Activated CD8-positive, alpha-beta memory T cell treated with anti-CD3 and anti-CD28 coated beads, Interleukin-2, amount 10 ng/mL, durations not matched to agents 7 days and 5 days (primary cell): ENCODE measurements at regions of chr14 and their contacts with region 1.

Region 1: DNA sequence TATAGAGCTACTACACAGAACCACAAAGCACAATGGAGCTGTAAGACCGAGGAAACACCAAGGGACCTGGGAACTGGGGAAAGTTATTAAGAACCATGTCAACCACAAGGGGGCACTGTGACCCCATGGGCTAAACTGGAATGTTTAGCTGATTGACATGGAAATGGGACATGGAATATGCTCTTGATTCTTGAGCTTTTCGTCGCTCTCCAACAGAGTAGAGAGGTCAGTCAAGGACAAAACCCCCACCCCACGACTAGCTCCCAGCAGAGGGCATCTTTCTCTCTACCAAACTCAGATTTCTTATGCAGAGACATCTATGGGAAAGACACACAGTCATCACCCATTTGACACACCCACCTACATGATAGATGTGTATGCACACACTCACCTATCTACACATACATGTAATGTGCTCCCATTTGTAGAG is 10.1 kb downstream of the NDRG2 start:
- DNase-seq: peak; percentile 83
- ATAC-seq: peak; percentile 78
- H3K4me3 Mint-ChIP-seq: no peak overlapping the region
- H3K27ac Mint-ChIP-seq: no peak overlapping the region
- H3K4me1 Mint-ChIP-seq: no peaks in the 10 kb centered on the region
- H3K27me3 Mint-ChIP-seq: peaks cover 23% of the 10 kb centered on the region

Region 2: DNA sequence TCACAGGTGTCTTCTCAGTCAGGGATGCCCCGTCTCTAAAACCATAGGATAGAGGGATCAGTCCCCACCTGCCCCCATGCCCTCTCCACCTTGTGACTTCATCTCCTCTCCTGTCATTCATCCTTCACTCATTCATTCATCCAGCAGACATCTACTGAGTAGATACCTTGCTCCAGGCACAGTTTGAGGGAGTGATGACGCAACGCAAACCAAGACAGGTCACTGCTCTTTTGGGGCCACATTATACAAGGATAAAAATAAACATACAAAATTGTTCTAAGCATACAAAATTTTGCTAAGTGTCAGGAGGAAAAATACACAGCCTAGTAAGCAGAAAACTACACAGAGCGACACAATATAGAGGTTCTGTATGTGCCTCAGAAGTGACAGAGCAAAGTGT is 92.3 kb before region 1 on chr14:
- CTCF ChIA-PET with region 1: no interaction called
- DNase-seq: no peak
- ATAC-seq: no peak
- H3K4me3 Mint-ChIP-seq: no peak overlapping the region
- H3K27ac Mint-ChIP-seq: no peak overlapping the region
- H3K4me1 Mint-ChIP-seq: no peaks in the 10 kb centered on the region
- H3K27me3 Mint-ChIP-seq: peaks cover 42% of the 10 kb centered on the region

Region 3: DNA sequence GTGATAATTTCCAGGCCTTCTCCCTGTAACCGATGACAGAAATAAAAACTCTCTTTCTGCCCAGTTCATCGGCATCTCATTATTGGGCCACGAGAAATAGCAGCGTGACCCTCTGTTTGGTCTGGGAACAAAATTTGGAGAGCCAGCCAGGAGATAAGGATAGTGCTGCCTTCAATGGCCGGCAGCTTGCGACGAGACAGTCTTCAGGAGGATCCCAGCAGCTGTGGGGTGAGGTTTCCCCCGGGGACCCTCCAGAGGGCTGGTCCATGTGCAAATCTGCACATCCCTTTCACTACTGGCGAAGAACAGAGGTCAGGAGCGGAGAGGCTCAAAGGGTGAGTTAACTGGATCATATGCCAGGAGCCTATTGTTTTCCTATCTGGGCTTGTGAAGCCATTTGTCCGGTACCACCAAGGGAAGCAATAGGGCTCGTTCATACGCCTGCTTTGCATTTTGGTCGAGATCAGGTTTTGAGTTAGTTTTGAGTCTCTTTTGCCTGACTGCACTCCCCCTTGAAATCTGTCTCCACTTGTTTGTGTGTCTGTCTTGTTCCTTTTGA is 10.9 kb before region 1 on chr14:
- CTCF ChIA-PET with region 1: interaction called, 29 read pairs
- DNase-seq: no peak
- ATAC-seq: no peak
- H3K4me3 Mint-ChIP-seq: no peak overlapping the region
- H3K27ac Mint-ChIP-seq: no peak overlapping the region
- H3K4me1 Mint-ChIP-seq: no peaks in the 10 kb centered on the region
- H3K27me3 Mint-ChIP-seq: no peaks in the 10 kb centered on the region

Region 4: DNA sequence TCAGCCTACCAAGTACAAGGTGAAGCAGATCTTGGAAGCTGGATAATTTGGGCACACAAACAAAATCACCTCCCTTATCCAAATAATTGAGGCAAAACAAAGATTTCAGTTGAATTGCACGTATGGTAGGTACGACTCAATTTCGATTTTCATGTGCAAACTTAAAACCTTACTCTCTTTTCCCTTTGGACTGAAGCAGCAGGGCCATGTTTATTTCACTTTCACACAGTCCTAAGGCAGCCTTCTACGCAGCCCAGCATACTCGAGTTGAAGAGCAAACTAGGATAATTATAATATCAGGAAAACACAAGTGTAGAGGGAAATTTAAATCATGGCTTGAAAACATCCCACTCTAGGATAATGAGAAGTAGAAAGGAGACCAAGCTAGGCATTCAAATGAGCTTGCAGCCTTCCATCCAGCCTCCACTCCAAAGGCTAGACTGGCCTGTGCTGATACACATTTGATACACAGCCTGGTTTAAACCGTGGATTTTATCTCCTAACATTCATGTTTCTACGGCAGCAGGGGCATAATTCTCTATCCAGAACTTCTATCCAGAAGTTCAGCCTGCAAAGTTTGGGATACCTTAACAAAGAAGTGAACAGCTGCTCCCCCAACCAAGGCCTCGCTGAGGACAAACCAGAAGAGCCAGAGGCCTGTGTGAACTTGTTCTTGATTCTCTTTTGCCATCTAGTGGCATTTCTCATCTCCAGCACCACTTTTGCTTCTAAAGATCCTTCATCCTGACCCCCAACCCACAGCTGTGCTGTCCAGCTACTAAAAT is 25.0 kb after region 1 on chr14:
- CTCF ChIA-PET with region 1: interaction called, 96 read pairs
- DNase-seq: no peak
- ATAC-seq: peak; percentile 33
- H3K4me3 Mint-ChIP-seq: no peak overlapping the region
- H3K27ac Mint-ChIP-seq: no peak overlapping the region
- H3K4me1 Mint-ChIP-seq: no peaks in the 10 kb centered on the region
- H3K27me3 Mint-ChIP-seq: peaks cover 21% of the 10 kb centered on the region

Region 5: DNA sequence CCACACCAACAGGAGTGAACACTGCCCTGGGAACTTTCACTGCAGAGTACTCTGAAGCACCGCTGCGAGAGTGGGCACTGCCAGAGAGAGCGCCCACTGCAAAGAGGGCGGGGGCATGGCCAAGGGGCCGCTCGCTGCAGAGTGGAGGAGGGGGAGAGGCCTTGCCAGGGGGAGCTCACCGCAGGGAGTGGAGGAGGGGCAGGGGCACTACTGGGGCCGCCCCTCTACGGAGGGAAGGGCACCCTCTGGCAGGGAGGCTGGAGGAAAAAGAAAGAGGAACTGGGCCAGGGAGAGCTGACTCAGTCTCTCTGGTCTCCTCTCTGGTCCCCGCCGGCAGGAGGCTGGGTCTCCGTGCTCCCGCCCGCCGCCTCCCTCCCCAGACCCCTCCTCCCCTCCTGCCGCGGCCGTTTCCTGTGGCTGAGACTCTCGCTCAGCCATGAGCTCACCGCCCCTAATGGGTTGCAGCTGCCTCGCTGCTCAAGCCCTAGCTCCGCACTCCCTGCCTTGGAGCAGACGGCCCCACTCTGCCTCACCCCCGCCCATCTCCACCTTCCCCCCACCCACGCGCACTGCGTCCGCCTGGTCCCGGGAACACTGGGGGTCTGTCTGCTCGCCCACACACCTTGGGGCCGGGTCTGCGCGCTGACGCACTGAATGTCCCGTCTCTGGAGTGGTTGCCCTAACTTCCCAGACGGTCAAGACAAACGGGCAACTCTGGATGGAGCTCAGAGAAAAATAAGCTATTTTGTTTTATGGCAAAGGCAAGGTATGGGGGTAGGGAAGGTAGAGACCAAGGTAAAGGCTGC is 56.7 kb after region 1 on chr14:
- CTCF ChIA-PET with region 1: interaction called, 27 read pairs
- DNase-seq: peak; percentile 71
- ATAC-seq: peak; percentile 57
- H3K4me3 Mint-ChIP-seq: peak overlapping the region; percentile 62
- H3K27ac Mint-ChIP-seq: no peak overlapping the region
- H3K4me1 Mint-ChIP-seq: peaks cover 31% of the 10 kb centered on the region
- H3K27me3 Mint-ChIP-seq: peaks cover 65% of the 10 kb centered on the region

Region 6: GRCh38 chr14:21103710-21104447 is 89.1 kb after region 1 on chr14:
- CTCF ChIA-PET with region 1: interaction called, 170 read pairs
- DNase-seq: peak; percentile 98
- ATAC-seq: peak; percentile 90
- H3K4me3 Mint-ChIP-seq: peak overlapping the region; percentile 97
- H3K27ac Mint-ChIP-seq: peak overlapping the region; percentile 98
- H3K4me1 Mint-ChIP-seq: peaks cover 49% of the 10 kb centered on the region
- H3K27me3 Mint-ChIP-seq: peaks cover 11% of the 10 kb centered on the region

Region 7: DNA sequence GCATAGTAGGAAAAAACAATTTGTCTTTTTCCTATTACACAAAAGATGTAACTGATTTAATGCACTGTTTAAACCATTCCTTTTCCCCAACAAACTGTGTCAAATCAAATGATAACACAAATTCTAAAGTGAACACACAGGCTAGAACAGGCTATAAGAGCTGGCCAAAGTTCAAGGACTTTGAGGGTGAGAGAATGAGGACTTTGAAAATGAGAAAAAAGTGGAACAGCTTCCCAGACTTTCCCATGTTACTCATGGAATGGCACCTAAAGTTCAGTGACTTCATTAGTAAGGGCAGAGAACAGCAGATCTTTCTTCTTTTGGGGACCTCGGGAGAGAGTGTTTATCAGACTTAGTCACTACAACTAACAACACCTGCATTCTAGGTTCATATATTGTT is 108.7 kb after region 1 on chr14:
- CTCF ChIA-PET with region 1: no interaction called
- DNase-seq: no peak
- ATAC-seq: no peak
- H3K4me3 Mint-ChIP-seq: no peak overlapping the region
- H3K27ac Mint-ChIP-seq: no peak overlapping the region
- H3K4me1 Mint-ChIP-seq: peaks cover 11% of the 10 kb centered on the region
- H3K27me3 Mint-ChIP-seq: peaks cover 41% of the 10 kb centered on the region

Region 8: GRCh38 chr14:21136024-21136423 is 121.2 kb after region 1 on chr14:
- CTCF ChIA-PET with region 1: interaction called, 15 read pairs
- DNase-seq: no peak
- ATAC-seq: no peak
- H3K4me3 Mint-ChIP-seq: no peak overlapping the region
- H3K27ac Mint-ChIP-seq: no peak overlapping the region
- H3K4me1 Mint-ChIP-seq: no peaks in the 10 kb centered on the region
- H3K27me3 Mint-ChIP-seq: no peaks in the 10 kb centered on the region

Region 9: DNA sequence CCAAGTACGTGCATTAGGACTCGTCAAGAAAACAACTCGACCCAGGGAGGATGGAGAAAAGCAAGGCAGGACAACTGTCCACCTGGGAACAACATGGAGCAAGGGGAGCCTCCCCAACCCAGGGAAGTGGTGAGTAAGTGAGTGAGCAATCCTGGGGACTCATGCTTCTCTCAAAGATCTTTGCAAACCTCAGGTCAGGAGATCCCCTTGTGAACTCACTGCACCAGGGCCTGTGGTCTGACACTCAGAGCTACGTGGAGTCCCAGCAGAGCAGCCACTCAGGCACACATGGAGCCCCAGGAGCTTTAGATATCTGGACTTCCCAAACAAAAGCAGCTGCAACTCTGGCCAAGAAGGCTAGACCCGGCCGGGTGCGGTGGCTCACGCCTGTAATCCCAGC is 153.3 kb after region 1 on chr14:
- CTCF ChIA-PET with region 1: no interaction called
- DNase-seq: no peak
- ATAC-seq: no peak
- H3K4me3 Mint-ChIP-seq: no peak overlapping the region
- H3K27ac Mint-ChIP-seq: no peak overlapping the region
- H3K4me1 Mint-ChIP-seq: no peaks in the 10 kb centered on the region
- H3K27me3 Mint-ChIP-seq: peaks cover 52% of the 10 kb centered on the region